ENCODE measurements at regions of chr2 and their contacts with region 1.

Region 1: GRCh38 chr2:143110758-143111428 is 18.3 kb upstream of the ARHGAP15 start:
- DNase-seq: peak; percentile 41 to 75 (median 58)
- H3K4me3 ChIP-seq: no peak overlapping the region
- H3K4me3 Mint-ChIP-seq: peak overlapping the region in 5 of 7 donors; percentile 4 to 51 (median 36)
- H3K27ac ChIP-seq: no peak overlapping the region
- H3K27ac Mint-ChIP-seq: peak overlapping the region in 7 of 8 donors; percentile 48 to 84 (median 74)
- H3K4me1 ChIP-seq: peaks cover 15% of the 10 kb centered on the region
- H3K4me1 Mint-ChIP-seq: peaks cover 10 to 28% (median 16%) of the 10 kb centered on the region in 3 donors
- H3K27me3 ChIP-seq: no peaks in the 10 kb centered on the region
- H3K27me3 Mint-ChIP-seq: no peaks in the 10 kb centered on the region

Region 2: DNA sequence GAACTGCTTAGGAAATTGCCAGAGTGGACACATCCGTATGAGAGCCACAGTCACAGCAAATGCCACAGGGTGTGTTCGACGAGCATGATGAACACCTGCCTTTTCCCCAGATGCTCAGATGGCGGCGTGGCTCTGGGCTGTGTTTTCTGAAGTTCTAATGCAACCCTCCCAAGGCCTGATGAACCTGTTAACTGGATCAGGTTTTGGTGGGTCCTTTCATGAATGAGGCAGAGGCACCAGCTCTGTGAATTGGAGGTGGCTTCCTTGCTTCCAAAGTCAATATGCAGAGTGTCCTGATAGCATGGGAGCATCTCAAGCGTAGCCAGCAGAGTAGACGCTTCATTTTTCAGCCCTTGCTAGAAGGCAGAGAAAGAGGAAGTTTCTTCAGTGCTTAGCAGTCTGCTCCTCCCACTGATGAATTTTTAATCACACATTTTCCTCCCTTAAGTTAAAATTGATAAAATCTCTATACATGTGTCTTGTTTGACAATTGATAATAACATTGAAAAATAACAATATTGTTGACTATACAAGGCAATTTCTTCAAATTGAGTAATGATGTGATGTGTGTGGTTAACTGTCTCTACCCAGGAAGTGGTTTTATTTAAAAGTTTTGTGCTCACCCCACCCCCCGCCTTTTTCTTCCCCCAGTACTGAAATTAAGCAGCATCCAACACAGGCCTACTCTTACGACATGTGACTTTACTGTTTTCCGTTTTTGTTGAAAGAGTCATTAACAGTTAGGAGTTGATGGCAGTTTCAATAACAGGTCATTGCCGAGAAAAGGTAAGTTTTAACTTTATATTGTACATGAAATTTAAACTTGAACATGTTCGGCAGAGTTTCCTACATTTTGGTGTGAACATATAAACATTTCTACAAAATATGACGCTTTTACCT is 18.0 kb after region 1 on chr2 and contains the start of gene ARHGAP15:
- CTCF ChIA-PET with region 1: interaction called, 13 read pairs
- POLR2A ChIA-PET with region 1: interaction called, 5 read pairs
- DNase-seq: peak; percentile 48 to 81 (median 78)
- H3K4me3 ChIP-seq: peak within 1 kb of the TSS; percentile 86
- H3K4me3 Mint-ChIP-seq: peak within 1 kb of the TSS; percentile 73 to 91 (median 83)
- H3K27ac ChIP-seq: peak within 1 kb of the TSS; percentile 81
- H3K27ac Mint-ChIP-seq: peak within 1 kb of the TSS; percentile 77 to 98 (median 94)
- H3K4me1 ChIP-seq: peaks cover 67% of the 10 kb centered on the region
- H3K4me1 Mint-ChIP-seq: peaks cover 35 to 56% (median 52%) of the 10 kb centered on the region in 3 donors
- H3K27me3 ChIP-seq: no peaks in the 10 kb centered on the region
- H3K27me3 Mint-ChIP-seq: no peaks in the 10 kb centered on the region
- total RNA-seq, gene ARHGAP15: 41.3 to 41.4 TPM

Region 3: GRCh38 chr2:143225931-143226330 is 115.0 kb after region 1 on chr2:
- CTCF ChIA-PET with region 1: interaction called, 39 read pairs
- POLR2A ChIA-PET with region 1: no interaction called
- DNase-seq: no peak
- H3K4me3 ChIP-seq: no peak overlapping the region
- H3K4me3 Mint-ChIP-seq: peak overlapping the region in 3 of 7 donors; percentile 8 to 21 (median 9)
- H3K27ac ChIP-seq: no peak overlapping the region
- H3K27ac Mint-ChIP-seq: peak overlapping the region; percentile 14 to 69 (median 46)
- H3K4me1 ChIP-seq: peaks cover 32% of the 10 kb centered on the region
- H3K4me1 Mint-ChIP-seq: peaks cover 40 to 75% (median 71%) of the 10 kb centered on the region in 3 donors
- H3K27me3 ChIP-seq: no peaks in the 10 kb centered on the region
- H3K27me3 Mint-ChIP-seq: no peaks in the 10 kb centered on the region